PC-3 (cell line): ENCODE measurements at regions of chr7 and their contacts with region 1.

Region 1: GRCh38 chr7:4744391-4745264 is 30.8 kb upstream of the AP5Z1 start:
- DNase-seq: peak; percentile 97
- ATAC-seq: peak; percentile 92
- H3K4me3 ChIP-seq: peak overlapping the region; percentile 66
- H3K27ac ChIP-seq: peak overlapping the region; percentile 94
- H3K4me1 ChIP-seq: peaks cover 27% of the 10 kb centered on the region
- H3K27me3 ChIP-seq: no peaks in the 10 kb centered on the region
- CTCF ChIP-seq: no peak

Region 2: DNA sequence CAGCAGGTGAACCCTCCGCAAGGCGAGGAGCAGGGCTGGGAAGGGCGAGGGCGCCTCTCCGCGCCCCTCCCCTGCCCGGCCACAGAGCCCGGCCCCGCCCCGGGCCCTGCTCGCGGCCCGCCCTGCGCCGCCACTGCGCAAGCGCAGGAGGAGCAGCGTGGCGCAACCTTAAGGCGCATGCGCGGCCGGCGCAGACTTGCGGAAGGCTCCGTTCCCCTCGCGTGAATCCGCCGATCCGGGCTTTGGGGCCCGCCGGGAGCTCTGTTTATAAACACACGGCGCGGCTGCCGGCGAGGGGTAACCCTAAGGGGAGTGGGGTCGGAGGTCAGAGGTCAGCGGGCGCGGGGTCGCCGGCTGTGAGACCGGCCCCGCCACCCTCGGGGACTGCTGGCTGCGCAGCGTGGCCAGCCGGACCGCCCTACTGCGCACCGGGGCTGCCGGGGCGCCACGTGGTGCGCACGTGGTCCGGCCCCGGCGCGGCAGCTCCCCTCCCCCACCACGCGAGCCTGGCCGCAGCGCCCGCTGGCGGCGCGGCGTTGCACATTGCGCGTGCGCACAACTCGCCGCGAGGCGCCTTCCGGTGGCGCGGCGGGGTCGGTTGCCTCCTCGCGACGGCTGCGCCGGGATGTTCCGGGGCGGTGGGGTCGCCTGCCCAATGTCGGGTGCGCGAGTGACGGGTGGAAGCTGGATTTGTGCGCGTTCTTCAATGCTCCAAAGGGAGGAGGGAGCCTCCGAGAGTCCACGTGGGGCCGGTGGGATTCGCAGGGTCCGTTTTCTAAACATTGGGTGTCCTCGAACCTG is 102.8 kb before region 1 on chr7:
- CTCF ChIA-PET with region 1: interaction called, 3 read pairs
- POLR2A ChIA-PET with region 1: no interaction called
- intact Hi-C with region 1: loop called (anchors 1 kb)
- DNase-seq: peak; percentile 95
- ATAC-seq: peak; percentile 97
- H3K4me3 ChIP-seq: peak overlapping the region; percentile 67
- H3K27ac ChIP-seq: peak overlapping the region; percentile 44; the same call in 1 of the 2 replicates
- H3K4me1 ChIP-seq: peaks cover 8% of the 10 kb centered on the region
- H3K27me3 ChIP-seq: no peaks in the 10 kb centered on the region
- CTCF ChIP-seq: peak; percentile 36; the same call in 1 of the 2 replicates

Region 3: DNA sequence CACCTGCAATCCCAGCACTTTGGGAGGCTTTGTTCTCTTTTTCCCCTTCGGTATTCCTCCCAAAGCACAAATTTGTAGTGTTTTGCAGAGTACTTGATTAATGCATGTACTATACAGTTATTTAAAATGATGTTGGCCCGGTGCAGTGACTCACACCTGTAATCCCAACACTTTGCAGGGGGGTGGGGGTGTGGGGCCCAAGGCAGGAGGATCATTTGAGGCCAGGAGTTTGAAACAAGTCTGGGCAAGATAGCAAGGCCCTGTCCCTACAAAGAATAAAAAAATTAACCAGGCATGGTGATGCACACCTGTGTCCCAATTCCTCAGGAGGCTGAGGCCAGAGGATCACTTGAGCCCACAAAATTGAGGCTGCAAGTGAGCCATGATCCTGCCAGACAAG is 89.3 kb before region 1 on chr7:
- CTCF ChIA-PET with region 1: no interaction called
- POLR2A ChIA-PET with region 1: no interaction called
- intact Hi-C with region 1: no loop called
- DNase-seq: no peak
- ATAC-seq: peak; percentile 37; the same call in 1 of the 2 replicates
- H3K4me3 ChIP-seq: no peak overlapping the region
- H3K27ac ChIP-seq: no peak overlapping the region
- H3K4me1 ChIP-seq: no peaks in the 10 kb centered on the region
- H3K27me3 ChIP-seq: no peaks in the 10 kb centered on the region
- CTCF ChIP-seq: no peak

Region 4: GRCh38 chr7:4681886-4682620 is 62.6 kb before region 1 on chr7 and contains the start of gene FOXK1:
- CTCF ChIA-PET with region 1: interaction called, 8 read pairs
- POLR2A ChIA-PET with region 1: no interaction called
- intact Hi-C with region 1: loop called (anchors 1 kb)
- DNase-seq: peak; percentile 67
- ATAC-seq: peak; percentile 65
- H3K4me3 ChIP-seq: peak within 1 kb of the TSS; percentile 71
- H3K27ac ChIP-seq: peak within 1 kb of the TSS; percentile 59
- H3K4me1 ChIP-seq: peaks cover 13% of the 10 kb centered on the region; the same call in 1 of the 2 replicates
- H3K27me3 ChIP-seq: no peaks in the 10 kb centered on the region
- CTCF ChIP-seq: no peak
- total RNA-seq, gene FOXK1: 13.2 and 22.8 TPM in 2 replicates

Region 5: DNA sequence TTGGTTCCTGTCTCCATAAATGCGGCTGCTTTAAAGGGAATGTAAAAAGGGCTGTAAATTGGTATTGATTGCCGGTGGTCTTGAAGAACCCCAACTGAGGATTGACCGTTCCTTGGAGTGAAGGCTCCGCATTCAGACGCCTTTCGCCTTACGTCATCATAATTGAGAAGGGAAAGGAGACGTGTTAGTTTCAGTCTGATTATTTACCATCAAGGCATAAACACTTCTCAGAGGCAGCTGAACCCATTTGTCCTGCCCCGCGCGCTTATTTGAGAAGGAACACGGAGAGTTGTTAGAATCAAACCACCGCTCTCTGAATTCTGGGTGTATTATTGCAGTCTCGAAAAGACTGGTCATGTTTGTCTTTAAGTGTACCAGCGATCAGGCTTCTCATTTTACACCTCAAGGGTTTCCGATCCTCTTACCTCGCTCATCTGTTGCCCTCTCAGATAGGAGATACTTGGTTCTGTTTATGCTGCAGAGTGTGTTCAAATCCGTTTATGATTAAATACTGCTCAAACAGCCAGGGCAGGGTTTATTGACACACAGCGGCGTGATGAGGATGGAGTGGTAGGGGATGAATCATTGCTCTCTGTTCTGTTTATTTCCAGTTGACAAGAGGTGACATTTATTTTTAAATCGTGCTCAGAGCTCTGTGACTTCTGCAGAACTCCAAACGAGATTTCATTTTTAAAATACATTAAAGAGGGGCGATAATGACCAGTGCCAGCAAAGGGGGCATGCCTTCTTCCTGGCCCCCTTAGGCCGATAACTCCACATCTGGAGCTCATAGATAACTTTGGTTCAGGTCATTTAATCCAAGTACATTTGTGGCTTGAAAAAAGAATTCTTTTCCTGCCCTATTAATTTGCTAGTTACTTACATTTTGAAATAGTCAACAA is 32.1 kb before region 1 on chr7:
- CTCF ChIA-PET with region 1: no interaction called
- POLR2A ChIA-PET with region 1: no interaction called
- intact Hi-C with region 1: loop called (anchors 1 kb)
- DNase-seq: peak; percentile 76
- ATAC-seq: peak; percentile 99
- H3K4me3 ChIP-seq: no peak overlapping the region
- H3K27ac ChIP-seq: 0 out of 2 replicates have a peak overlapping the region, but pooled peaks have one; percentile 8
- H3K4me1 ChIP-seq: peaks cover 14% of the 10 kb centered on the region
- H3K27me3 ChIP-seq: no peaks in the 10 kb centered on the region
- CTCF ChIP-seq: no peak

Region 6: DNA sequence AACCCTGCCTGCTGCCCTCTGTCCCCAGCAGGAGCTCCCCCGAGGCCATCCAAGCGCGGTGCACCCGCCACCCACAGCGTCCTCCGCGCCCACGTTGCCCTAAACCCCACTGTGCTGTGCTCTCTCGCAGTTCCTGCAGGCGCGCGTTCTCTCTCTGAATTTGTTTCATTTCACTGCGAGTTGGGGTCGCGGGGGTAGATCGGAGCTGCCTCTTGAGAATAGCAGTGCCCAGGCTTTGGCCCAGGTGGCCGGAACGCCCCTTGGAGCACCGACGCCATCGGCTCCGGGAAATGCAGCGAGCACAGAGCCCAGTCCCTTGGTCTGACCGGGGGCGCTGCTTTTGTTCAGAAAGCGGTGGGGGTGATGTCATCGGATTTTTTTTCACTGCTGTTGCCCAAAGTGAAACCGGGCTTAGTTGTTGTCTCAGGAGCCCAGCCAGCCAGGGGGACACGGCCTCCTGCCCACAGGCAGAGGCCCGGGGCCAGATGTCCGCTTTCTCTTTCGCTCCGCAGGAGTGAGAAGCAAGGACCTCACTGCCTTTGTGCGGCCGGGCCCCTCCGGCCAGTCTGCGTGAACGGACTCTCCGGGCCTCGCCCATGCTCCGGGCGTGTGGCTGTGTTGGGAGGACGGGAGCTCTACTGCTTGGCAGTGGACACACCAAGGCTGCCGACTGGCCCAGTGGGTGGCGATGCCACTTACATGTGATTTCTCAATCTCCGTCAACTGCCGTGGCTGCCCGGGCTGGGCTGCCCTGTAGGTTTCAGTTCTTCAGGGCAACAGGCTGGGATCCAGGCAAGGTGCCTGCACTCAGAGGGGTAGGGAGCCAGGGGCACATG is 19.4 kb before region 1 on chr7:
- CTCF ChIA-PET with region 1: no interaction called
- POLR2A ChIA-PET with region 1: no interaction called
- intact Hi-C with region 1: loop called (anchors 1 kb)
- DNase-seq: peak; percentile 60
- ATAC-seq: peak; percentile 86
- H3K4me3 ChIP-seq: peak overlapping the region; percentile 73
- H3K27ac ChIP-seq: peak overlapping the region; percentile 64
- H3K4me1 ChIP-seq: peaks cover 9% of the 10 kb centered on the region; the same call in 1 of the 2 replicates
- H3K27me3 ChIP-seq: no peaks in the 10 kb centered on the region
- CTCF ChIP-seq: no peak

Region 7: DNA sequence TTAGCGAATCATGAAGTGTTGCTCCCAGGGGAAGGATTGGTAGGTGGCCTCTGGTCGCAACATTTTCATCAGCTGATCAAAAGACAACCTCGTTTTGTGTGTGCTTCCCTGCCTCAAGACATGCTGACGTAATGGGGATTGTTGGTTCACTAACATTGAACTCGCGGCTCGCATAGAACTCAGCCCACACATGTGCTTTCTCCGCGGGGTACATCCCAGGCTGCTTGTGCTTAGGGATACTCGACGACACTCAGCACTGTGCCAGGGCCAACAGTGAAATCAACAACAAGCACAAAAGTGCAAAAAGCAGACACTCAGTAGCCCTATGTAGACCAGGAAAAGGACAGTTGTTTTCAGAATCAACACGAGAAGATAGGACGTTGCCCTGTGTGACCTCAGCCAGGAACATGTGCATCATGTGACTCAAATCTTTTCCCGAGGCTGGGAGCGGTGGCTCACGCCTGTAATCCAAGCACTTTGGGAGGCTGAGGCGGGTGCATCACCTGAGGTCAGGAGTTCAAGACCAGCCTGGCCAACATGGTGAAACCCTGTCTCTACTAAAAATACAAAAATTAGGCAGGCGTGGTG is 466.2 kb after region 1 on chr7:
- CTCF ChIA-PET with region 1: no interaction called
- POLR2A ChIA-PET with region 1: interaction called, 11 read pairs
- intact Hi-C with region 1: no loop called
- DNase-seq: no peak
- ATAC-seq: no peak
- H3K4me3 ChIP-seq: no peak overlapping the region
- H3K27ac ChIP-seq: no peak overlapping the region
- H3K4me1 ChIP-seq: no peaks in the 10 kb centered on the region
- H3K27me3 ChIP-seq: no peaks in the 10 kb centered on the region
- CTCF ChIP-seq: no peak